Right ventricle myocardium inferior (tissue), 1 donor: ENCODE measurements at regions of chr3 and their contacts with region 1.

Region 1: GRCh38 chr3:187745201-187746058 is at the start of gene BCL6:
- DNase-seq: peak; percentile 96
- ATAC-seq: peak; percentile 73
- total RNA-seq, gene BCL6: 95.5 TPM

Region 2: GRCh38 chr3:187947927-187948682 is 202.7 kb after region 1 on chr3:
- intact Hi-C with region 1: loop called (anchors 2 kb)
- DNase-seq: no peak
- ATAC-seq: peak; percentile 90

Region 3: GRCh38 chr3:187963677-187964385 is 218.4 kb after region 1 on chr3:
- intact Hi-C with region 1: loop called (anchors 5 kb)
- DNase-seq: no peak
- ATAC-seq: peak; percentile 85

Region 4: DNA sequence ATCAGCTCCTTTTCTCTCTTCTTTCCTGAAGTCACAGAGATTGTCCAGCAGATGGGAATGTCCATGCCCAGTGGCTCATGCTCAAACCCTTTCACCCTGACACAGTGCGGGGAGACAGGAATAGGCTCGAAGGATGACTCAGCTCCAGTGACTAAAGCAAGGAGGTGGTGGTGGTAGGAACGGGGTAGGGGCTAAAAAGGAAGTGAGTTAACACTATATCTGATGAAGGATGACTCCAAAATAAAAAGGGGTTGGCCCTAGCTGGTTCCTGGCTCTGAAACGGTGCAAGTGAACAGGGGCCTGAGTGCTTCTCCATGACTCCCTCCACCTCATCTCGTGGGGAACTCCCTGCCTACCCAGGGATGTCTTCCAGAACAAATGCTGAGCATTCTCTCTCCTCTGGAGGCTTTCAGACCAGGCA is 241.1 kb after region 1 on chr3:
- intact Hi-C with region 1: loop called (anchors 5 kb)
- DNase-seq: no peak
- ATAC-seq: no peak

Region 5: DNA sequence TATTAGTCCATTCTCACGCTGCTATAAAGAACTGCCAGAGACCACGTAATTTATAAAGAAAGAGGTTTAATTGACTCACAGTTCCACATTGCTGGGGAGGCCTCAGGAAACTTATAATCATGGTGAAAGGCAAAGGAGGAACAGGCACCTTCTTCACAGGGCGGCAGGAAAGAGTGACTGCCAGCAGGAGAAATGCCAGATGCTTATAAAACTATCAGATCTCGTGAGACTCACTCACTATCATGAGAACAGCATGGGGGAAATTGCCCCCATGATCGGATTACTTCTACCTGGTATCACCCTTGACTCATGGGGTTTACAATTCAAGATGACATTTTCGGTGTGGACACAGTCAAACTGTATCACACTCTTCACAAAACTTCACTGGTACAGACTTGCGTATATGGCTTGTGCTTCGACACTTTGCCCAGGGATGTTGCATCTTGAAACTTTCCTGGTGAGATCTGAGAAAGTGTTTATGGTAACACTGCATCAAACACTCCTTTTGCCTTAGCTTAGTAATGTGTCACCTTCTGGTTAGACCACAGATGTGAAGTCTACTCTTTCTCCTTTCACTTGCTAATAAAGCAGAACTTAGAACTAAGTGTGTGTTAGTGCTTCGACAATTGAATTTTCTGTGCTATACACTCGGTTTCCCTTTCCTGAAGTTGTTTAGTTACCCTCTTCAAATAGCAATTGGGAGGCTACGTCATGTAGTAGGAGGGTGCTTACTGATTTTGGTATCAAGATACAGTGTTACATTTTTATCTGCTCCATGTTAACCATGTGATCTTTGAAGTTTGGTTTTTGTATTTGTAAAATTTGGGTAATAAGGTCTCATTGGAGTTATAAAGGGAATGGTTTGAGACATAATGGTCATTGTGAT is 594.2 kb after region 1 on chr3:
- intact Hi-C with region 1: loop called (anchors 2 kb)
- DNase-seq: no peak
- ATAC-seq: no peak

Region 6: DNA sequence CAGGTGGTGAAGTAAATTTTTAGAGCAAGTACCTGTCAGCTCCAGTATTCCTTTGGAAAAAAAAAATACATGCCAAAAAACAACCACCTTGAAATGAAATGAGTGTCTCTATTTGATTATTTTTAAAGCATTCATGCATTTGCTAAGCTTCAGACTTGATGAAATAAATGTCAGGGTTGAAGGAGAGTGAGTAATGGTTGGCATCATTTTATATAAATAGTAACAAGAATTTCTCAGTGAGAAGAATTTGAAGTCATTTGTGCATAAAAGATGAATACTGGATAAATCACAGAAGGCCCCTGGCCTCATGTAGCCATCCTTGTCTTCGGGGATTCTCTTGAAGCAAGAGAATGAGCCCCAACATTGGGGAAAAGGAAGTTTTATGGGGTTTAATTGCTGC is 726.9 kb after region 1 on chr3:
- intact Hi-C with region 1: loop called (anchors 10 kb)
- DNase-seq: no peak
- ATAC-seq: no peak

Region 7: DNA sequence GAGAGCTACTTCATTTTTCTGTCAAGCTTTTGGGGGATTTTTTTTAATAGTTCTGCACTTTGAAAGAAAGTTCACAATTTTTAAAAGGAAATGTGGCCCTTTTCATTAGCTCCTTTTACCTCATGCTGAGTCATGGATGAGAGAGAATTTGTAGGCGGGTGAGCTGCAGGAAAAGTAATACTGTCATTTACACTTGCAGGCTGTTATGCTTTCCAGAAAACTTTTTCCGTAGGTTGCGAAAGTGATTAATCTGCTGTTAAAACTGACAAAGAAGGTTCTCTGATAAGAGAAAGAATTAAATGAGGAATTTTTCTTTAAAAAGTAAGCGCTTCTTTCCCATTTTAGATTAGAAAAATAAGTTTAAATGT is 838.7 kb after region 1 on chr3:
- intact Hi-C with region 1: loop called (anchors 10 kb)
- DNase-seq: no peak
- ATAC-seq: peak; percentile 71